PC-9 (cell line): ENCODE measurements at regions of chr7 and their contacts with region 1.

Region 1: DNA sequence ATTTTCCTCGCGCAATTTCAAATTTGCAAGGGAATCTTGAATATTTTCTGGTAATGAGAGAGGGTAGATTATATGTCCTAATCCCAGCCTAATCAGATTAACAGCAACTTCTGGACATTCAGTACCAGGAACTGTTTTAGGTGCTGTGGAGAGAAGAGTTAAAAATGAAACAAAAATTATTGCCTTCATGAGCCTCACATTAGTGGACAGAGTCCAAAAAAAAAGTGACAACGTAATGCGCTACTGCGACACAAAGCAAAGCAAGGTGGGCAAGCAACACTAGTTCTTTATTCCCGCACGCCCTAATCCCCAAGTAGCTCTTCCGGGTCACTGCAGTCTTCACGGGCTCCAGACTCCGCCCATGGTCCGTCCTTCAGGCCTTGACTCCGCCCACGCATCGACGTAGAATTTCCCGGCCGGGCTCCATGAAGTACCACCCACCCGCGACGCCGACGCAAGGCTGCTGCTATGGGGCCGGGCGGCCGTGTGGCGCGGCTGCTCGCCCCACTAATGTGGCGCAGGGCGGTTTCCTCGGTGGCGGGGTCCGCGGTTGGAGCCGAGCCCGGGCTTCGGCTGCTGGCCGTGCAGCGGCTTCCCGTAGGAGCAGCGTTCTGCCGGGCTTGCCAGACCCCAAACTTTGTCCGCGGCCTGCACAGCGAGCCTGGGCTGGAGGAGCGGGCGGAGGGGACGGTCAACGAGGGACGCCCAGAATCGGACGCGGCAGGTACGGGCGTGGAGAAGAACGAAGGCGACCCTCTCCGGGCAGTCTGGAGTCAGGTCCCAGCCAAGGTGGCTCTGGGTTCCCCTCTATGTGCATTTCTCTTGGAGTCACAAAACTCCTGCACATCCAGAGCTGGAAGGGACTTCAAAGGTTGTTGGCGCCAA is at the start of gene MALSU1:
- DNase-seq: peak; percentile 95 to 97
- H3K4me3 ChIP-seq: peak within 1 kb of the TSS; percentile 71
- H3K27ac ChIP-seq: peak within 1 kb of the TSS; percentile 85
- H3K4me1 ChIP-seq: peaks cover 27% of the 10 kb centered on the region
- H3K27me3 ChIP-seq: no peaks in the 10 kb centered on the region
- CTCF ChIP-seq: no peak
- total RNA-seq, gene MALSU1: 105 and 133 TPM in 2 replicates

Region 2: DNA sequence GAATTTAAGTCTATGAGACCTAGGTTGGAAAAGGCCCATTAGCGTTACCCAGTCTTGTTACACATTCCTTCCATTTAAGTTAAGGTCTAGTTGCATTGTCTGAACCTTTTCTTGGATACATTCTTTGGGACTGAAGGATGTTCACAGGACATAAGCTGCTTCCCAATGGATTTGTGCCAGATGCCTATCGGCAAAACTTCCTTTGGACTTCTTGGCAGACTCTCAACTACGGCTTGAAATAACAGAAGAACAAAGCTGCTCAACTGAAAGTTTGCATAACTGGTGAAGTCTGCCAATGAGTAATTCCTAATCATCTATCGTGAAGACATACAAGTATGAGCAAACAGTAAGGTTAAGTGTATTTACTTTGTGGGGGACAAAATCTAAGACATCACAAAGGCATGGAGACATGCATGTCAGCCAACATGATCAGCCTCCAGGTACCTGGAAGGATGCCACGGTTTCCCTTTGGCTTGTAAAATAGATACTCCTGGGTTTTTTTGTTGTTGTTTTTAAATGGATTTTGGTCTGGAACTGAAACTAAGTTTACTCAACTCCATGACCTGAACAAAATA is 35.4 kb after region 1 on chr7:
- CTCF ChIA-PET with region 1: no interaction called
- POLR2A ChIA-PET with region 1: interaction called, 6 read pairs
- intact Hi-C with region 1: loop called (anchors 2 kb)
- DNase-seq: peak; percentile 80 to 100
- H3K4me3 ChIP-seq: no peak overlapping the region
- H3K27ac ChIP-seq: peak overlapping the region; percentile 60
- H3K4me1 ChIP-seq: peaks cover 52% of the 10 kb centered on the region
- H3K27me3 ChIP-seq: no peaks in the 10 kb centered on the region
- CTCF ChIP-seq: no peak

Region 3: DNA sequence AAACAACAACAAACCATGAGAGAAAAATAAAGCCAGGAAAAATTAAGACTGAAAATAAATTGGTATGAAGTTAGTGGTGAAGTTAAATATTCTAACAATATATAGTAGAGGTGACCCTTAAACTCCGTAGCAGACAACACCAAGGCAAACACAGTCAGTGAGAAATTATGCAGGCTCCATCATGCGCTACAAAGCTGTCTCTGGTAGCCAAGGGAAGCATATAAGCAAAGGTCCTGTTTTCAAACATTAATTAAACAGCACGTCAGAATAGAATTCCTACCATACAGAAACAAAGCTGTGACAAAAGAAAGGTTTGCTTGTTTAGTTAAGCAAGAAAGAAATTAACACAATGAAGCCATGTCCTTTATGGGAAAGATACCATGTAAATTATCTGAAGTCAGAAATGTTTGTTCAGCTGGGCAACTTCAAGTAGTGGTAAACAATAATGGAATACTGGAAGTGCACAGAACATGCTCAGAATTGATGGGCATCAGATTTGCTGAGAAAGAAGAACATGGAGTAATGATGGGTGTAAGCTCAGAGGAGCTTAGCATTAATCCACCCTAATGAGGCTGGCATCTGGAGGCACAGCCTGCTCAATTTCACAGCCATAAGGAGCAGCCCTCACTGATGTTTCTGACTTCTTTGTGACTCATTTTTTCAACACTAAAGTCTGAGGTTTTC is 95.5 kb after region 1 on chr7:
- CTCF ChIA-PET with region 1: no interaction called
- POLR2A ChIA-PET with region 1: interaction called, 11 read pairs
- intact Hi-C with region 1: no loop called
- DNase-seq: no peak
- H3K4me3 ChIP-seq: no peak overlapping the region
- H3K27ac ChIP-seq: no peak overlapping the region
- H3K4me1 ChIP-seq: no peaks in the 10 kb centered on the region
- H3K27me3 ChIP-seq: no peaks in the 10 kb centered on the region
- CTCF ChIP-seq: no peak

Region 4: GRCh38 chr7:23531794-23532489 is 232.8 kb after region 1 on chr7 and contains the start of gene TRA2A:
- CTCF ChIA-PET with region 1: no interaction called
- POLR2A ChIA-PET with region 1: no interaction called
- intact Hi-C with region 1: loop called (anchors 1 kb)
- DNase-seq: peak; percentile 91 to 98
- H3K4me3 ChIP-seq: peak within 1 kb of the TSS; percentile 89
- H3K27ac ChIP-seq: peak within 1 kb of the TSS; percentile 89
- H3K4me1 ChIP-seq: peaks cover 36% of the 10 kb centered on the region
- H3K27me3 ChIP-seq: no peaks in the 10 kb centered on the region
- CTCF ChIP-seq: no peak
- total RNA-seq, gene TRA2A: 77.0 and 112 TPM in 2 replicates